Lower leg skin (tissue), 4 donors: ENCODE measurements at regions of chr7 and their contacts with region 1.

Region 1: GRCh38 chr7:75866489-75867389 is 12.1 kb upstream of the RHBDD2 start:
- DNase-seq: peak; percentile 41 to 88
- H3K4me3 ChIP-seq: no peak overlapping the region
- CTCF ChIP-seq: no peak
- POLR2A ChIP-seq: no peak

Region 2: GRCh38 chr7:75808106-75808505 is 58.6 kb before region 1 on chr7:
- intact Hi-C with region 1: no loop called
- DNase-seq: no peak
- H3K4me3 ChIP-seq: no peak overlapping the region
- CTCF ChIP-seq: no peak
- POLR2A ChIP-seq: no peak

Region 3: DNA sequence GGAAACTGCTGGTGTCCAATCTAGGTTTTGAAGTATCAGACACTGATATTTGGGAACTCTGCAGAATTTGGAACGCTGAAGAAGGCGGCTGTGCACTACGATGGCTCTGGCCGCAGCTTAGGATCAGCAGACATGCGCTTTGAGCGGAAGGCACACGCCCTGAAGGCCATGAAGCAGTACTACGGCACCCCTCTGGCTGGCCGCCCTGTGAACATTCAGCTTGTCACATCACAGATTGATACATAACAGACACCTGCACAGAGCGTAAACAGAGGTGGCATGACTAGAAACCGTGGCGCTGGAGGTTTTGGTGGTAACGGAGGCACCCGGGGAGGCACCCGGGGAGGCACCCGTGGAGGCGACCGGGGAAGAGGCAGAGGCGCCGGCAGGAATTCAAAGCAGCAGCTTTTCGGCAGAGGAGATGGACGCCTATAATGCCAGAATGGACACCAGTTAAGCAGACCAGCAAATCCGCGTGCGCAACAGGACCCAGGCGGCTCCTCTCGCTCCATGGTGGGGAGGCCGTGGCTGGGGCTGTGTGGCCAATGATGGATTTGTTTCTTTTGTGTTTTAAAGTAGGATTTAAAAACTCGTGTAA is 31.0 kb before region 1 on chr7:
- intact Hi-C with region 1: no loop called
- DNase-seq: no peak
- H3K4me3 ChIP-seq: no peak overlapping the region
- CTCF ChIP-seq: no peak
- POLR2A ChIP-seq: no peak

Region 4: GRCh38 chr7:75928331-75928909 is 61.7 kb after region 1 on chr7:
- intact Hi-C with region 1: loop called (anchors 10 kb)
- DNase-seq: no peak
- H3K4me3 ChIP-seq: no peak overlapping the region
- CTCF ChIP-seq: no peak
- POLR2A ChIP-seq: no peak

Region 5: DNA sequence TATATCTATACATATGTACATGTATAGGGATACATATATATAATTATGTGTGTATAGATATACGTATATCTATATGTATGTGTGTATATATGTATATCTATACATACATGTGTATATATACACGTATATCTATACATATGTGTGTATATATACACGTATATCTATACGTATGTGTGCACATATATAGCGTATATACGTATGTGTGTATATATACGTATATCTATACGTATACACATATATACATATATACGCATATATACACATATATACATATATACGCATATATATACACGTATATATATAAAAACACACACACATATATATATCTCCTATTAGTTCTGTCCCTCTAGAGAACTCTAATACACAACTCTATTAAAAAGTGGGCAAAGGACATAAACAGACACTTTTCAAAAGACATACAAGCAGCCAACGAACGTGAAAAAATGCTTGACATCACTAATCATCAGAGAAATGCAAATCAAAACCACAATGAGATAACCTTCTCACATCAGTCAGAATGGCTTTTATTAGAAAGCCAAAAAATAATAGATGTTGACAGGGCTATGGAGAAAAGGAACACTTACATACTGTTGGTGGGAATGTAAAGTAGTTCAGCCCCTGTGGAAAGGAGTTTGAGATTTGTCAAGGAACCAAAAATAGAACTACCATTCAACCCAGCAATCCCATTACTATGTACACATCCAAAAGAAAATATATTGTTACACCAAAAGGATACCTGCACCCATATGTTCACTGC is 149.6 kb after region 1 on chr7:
- intact Hi-C with region 1: loop called (anchors 5 kb)
- DNase-seq: no peak
- H3K4me3 ChIP-seq: no peak overlapping the region
- CTCF ChIP-seq: no peak
- POLR2A ChIP-seq: no peak

Region 6: DNA sequence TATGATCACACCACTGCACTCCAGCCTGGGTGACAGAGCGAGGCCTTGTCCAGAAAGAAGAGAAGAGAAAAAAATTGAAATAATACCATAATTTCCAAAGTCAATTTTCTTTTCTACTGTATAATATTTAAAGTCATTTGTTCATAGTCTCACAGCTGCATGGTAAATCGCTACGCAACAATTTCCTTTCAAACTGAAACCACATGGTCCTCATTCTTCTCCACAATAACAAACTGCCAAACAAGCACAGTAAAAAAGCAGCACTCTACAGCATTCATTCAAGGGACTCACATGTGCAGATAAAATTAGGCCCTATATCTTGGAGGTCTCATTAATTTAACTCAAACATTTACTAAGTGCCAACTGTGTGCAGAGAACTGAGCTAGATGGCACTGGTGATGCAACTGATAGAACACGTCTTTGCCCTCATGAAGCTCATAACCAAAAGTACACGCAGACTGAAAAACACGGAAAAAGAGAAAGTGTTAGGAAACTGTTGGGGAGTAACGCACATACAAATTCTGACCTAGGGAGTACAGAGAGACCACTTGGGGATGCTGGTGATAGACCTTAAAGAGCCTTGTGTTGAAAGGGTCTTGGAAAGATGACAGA is 266.5 kb after region 1 on chr7:
- intact Hi-C with region 1: loop called (anchors 10 kb)
- DNase-seq: no peak
- H3K4me3 ChIP-seq: no peak overlapping the region
- CTCF ChIP-seq: no peak
- POLR2A ChIP-seq: no peak